ENCODE measurements at regions of chr19 and their contacts with region 1.

Region 1: DNA sequence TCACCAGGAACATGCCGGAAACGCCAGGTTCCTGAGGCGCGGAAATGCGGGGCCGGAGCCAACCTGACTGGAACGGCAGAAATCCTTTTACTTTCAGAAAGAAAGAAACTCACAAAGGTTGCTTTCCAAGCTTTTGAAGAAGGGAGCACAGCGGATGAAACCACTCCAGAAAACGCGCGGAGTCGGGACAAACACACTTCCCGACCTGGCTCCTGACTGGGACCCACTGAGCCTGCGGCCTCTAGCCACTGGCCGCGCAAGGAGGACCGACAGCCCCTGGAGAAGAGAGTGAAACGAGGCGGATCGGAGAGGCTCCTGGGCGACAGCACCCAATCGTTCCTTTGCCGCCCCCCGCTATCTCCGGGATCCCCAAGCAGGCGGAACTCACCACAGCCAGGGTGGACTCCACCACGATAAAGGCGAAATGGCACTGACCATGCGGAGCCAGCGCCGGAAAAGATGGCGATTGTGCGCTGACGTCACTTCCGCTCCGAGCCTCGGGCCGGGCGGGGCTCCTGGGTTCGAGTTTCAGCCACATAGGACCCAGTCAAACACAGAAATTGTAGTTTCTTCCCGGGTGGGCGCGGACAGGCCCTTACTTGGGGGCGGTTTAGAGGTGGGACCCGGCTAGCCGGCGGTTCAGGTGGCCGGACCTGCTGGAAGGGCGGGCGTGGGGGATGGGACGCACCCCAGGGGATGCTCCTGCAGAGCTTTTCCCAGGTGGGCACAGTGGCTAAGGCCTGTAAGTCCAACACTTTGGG is at the start of gene ZNF121:
- DNase-seq: peak; percentile 73
- ATAC-seq: peak; percentile 93
- H3K4me3 ChIP-seq: peak within 1 kb of the TSS; percentile 96
- H3K27ac ChIP-seq: peak within 1 kb of the TSS; percentile 97
- H3K4me1 ChIP-seq: no peaks in the 10 kb centered on the region
- H3K27me3 ChIP-seq: no peaks in the 10 kb centered on the region; the same call in 1 of the 2 replicates
- CTCF ChIP-seq: no peak
- POLR2A ChIP-seq: peak; percentile 89
- RAD21 ChIP-seq: no peak
- total RNA-seq, gene ZNF121: 62.9 and 83.6 TPM in 2 replicates

Region 2: GRCh38 chr19:9140159-9140874 is 443.9 kb before region 1 on chr19 and contains the start of gene ZNF317:
- CTCF ChIA-PET with region 1: no interaction called
- POLR2A ChIA-PET with region 1: no interaction called
- dilution Hi-C with region 1: no loop called
- in situ Hi-C with region 1: no loop called
- intact Hi-C with region 1: loop called (anchors 2 kb)
- DNase-seq: peak; percentile 88
- ATAC-seq: peak; percentile 97
- H3K4me3 ChIP-seq: peak within 1 kb of the TSS; percentile 88
- H3K27ac ChIP-seq: peak within 1 kb of the TSS; percentile 93
- H3K4me1 ChIP-seq: no peaks in the 10 kb centered on the region
- H3K27me3 ChIP-seq: no peaks in the 10 kb centered on the region
- CTCF ChIP-seq: no peak
- POLR2A ChIP-seq: peak; percentile 81
- RAD21 ChIP-seq: no peak
- total RNA-seq, gene ZNF317: 16.4 and 17.6 TPM in 2 replicates

Region 3: GRCh38 chr19:9205501-9206113 is 378.6 kb before region 1 on chr19:
- CTCF ChIA-PET with region 1: no interaction called
- POLR2A ChIA-PET with region 1: no interaction called
- dilution Hi-C with region 1: no loop called
- in situ Hi-C with region 1: no loop called
- intact Hi-C with region 1: loop called (anchors 5 kb)
- DNase-seq: peak; percentile 54
- ATAC-seq: peak; percentile 97
- H3K4me3 ChIP-seq: peak overlapping the region; percentile 17
- H3K27ac ChIP-seq: no peak overlapping the region
- H3K4me1 ChIP-seq: no peaks in the 10 kb centered on the region
- H3K27me3 ChIP-seq: no peaks in the 10 kb centered on the region
- CTCF ChIP-seq: peak; percentile 72
- POLR2A ChIP-seq: no peak
- RAD21 ChIP-seq: peak; percentile 79

Region 4: GRCh38 chr19:9309139-9309973 is 274.9 kb before region 1 on chr19 and contains the start of gene ZNF699:
- CTCF ChIA-PET with region 1: no interaction called
- POLR2A ChIA-PET with region 1: no interaction called
- dilution Hi-C with region 1: no loop called
- in situ Hi-C with region 1: no loop called
- intact Hi-C with region 1: loop called (anchors 10 kb)
- DNase-seq: peak; percentile 96
- ATAC-seq: peak; percentile 92
- H3K4me3 ChIP-seq: peak within 1 kb of the TSS; percentile 94
- H3K27ac ChIP-seq: peak within 1 kb of the TSS; percentile 86
- H3K4me1 ChIP-seq: 0 out of 2 replicates have a peak, but pooled peaks cover 2% of the 10 kb centered on the region
- H3K27me3 ChIP-seq: no peaks in the 10 kb centered on the region
- CTCF ChIP-seq: no peak
- POLR2A ChIP-seq: peak; percentile 81
- RAD21 ChIP-seq: no peak
- total RNA-seq, gene ZNF699: 7.2 and 7.3 TPM in 2 replicates

Region 5: DNA sequence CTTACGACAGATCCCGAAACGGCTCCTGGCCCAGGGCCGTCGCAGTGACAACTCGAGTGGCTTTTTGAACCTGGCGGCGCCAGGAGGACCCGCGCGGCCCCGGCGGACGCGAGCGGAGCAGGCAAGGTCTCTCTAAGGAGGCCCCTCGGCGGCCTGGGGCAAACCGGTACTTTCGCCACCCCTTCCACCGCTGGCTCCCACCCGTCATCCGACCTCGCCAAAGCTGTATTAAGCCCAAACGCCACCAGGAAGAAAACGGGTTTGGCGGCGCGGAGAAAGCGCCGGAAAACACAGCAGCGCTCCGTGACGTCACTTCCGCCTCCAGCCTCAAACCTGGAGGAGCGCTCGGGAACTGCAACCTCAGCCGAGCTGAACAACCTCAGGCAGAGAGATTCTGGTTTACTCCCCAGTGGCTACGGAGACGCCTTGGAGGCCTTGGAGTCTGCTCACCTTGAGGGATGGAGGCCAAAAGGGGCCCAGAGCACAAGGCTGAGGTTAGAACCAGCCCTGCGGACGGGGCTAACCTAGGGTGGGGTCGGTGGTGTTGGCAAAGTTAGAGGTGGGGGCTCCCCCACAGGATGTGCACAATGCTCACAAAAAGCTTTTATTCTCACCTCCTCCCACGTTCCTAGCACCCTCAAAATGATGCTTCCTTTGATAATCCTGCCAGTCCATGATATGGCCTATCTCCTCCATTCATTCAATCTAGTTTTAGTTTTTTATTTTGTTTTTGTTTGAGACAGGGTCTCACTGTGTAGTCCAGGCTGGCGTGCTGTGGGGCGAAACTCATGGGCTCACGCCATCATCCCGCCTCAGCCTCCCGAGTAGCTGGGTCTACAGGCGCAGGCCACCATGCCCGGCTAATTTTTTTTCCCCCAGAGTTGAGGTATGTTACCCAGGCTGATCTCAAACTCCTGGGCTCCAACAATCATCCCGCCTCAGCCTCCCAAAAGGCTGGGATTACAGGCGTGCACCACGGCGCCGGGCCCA is 148.7 kb before region 1 on chr19 and contains the start of gene ZNF266:
- CTCF ChIA-PET with region 1: no interaction called
- POLR2A ChIA-PET with region 1: no interaction called
- dilution Hi-C with region 1: no loop called
- in situ Hi-C with region 1: no loop called
- intact Hi-C with region 1: loop called (anchors 5 kb)
- DNase-seq: peak; percentile 90
- ATAC-seq: peak; percentile 96
- H3K4me3 ChIP-seq: peak within 1 kb of the TSS; percentile 92
- H3K27ac ChIP-seq: peak within 1 kb of the TSS; percentile 88
- H3K4me1 ChIP-seq: no peaks in the 10 kb centered on the region; the same call in 1 of the 2 replicates
- H3K27me3 ChIP-seq: no peaks in the 10 kb centered on the region
- CTCF ChIP-seq: peak; percentile 71
- POLR2A ChIP-seq: peak; percentile 74; the same call in 1 of the 2 replicates
- RAD21 ChIP-seq: no peak
- total RNA-seq, gene ZNF266: 7.8 and 9.3 TPM in 2 replicates

Region 6: GRCh38 chr19:9741476-9742171 is 157.4 kb after region 1 on chr19:
- CTCF ChIA-PET with region 1: no interaction called
- POLR2A ChIA-PET with region 1: no interaction called
- dilution Hi-C with region 1: no loop called
- in situ Hi-C with region 1: no loop called
- intact Hi-C with region 1: no loop called
- DNase-seq: peak; percentile 1
- ATAC-seq: peak; percentile 37
- H3K4me3 ChIP-seq: no peak overlapping the region
- H3K27ac ChIP-seq: no peak overlapping the region
- H3K4me1 ChIP-seq: no peaks in the 10 kb centered on the region
- H3K27me3 ChIP-seq: no peaks in the 10 kb centered on the region
- CTCF ChIP-seq: no peak
- POLR2A ChIP-seq: no peak
- RAD21 ChIP-seq: no peak

Region 7: GRCh38 chr19:9785367-9786331 is 201.4 kb after region 1 on chr19:
- CTCF ChIA-PET with region 1: no interaction called
- POLR2A ChIA-PET with region 1: no interaction called
- dilution Hi-C with region 1: no loop called
- in situ Hi-C with region 1: no loop called
- intact Hi-C with region 1: loop called (anchors 1 kb)
- DNase-seq: peak; percentile 92
- ATAC-seq: peak; percentile 88
- H3K4me3 ChIP-seq: peak overlapping the region; percentile 92
- H3K27ac ChIP-seq: peak overlapping the region; percentile 95
- H3K4me1 ChIP-seq: peaks cover 8% of the 10 kb centered on the region
- H3K27me3 ChIP-seq: no peaks in the 10 kb centered on the region
- CTCF ChIP-seq: no peak
- POLR2A ChIP-seq: peak; percentile 64; the same call in 1 of the 2 replicates
- RAD21 ChIP-seq: no peak